Activated CD8-positive, alpha-beta memory T cell treated with anti-CD3 and anti-CD28 coated beads, Interleukin-2, amount 10 ng/mL, durations not matched to agents 7 days and 5 days (primary cell): ENCODE measurements at regions of chr6 and their contacts with region 1.

Region 1: GRCh38 chr6:30489081-30490025 is at the start of gene HLA-E:
- DNase-seq: peak; percentile 96
- ATAC-seq: peak; percentile 83
- H3K4me3 Mint-ChIP-seq: peak within 1 kb of the TSS; percentile 99
- H3K27ac Mint-ChIP-seq: peak within 1 kb of the TSS; percentile 98
- H3K4me1 Mint-ChIP-seq: peaks cover 50% of the 10 kb centered on the region
- H3K27me3 Mint-ChIP-seq: peaks cover 2% of the 10 kb centered on the region
- total RNA-seq, gene HLA-E: 395 to 602 TPM

Region 2: DNA sequence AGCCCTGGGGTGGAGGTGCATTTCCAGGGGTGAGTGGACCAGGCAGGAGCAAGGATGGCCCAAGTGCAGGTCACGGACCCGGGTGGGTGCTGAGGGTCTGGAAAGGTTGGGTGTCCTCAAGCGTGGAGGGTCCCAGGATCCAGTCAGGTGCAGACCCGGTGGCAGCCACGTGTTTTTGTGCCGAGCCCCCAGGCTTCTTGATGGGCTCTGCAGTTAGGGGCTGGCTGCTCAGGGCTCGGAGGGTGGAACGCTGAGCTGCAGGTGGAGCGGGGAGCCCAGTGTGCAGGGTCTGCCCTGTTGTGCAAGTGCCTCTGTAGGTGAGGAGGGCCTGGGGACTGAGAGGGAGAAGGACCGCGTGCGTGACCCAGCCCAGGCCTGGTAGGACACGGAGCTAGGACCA is 70.9 kb before region 1 on chr6:
- CTCF ChIA-PET with region 1: no interaction called
- DNase-seq: no peak
- ATAC-seq: no peak
- H3K4me3 Mint-ChIP-seq: no peak overlapping the region
- H3K27ac Mint-ChIP-seq: no peak overlapping the region
- H3K4me1 Mint-ChIP-seq: no peaks in the 10 kb centered on the region
- H3K27me3 Mint-ChIP-seq: peaks cover 62% of the 10 kb centered on the region

Region 3: DNA sequence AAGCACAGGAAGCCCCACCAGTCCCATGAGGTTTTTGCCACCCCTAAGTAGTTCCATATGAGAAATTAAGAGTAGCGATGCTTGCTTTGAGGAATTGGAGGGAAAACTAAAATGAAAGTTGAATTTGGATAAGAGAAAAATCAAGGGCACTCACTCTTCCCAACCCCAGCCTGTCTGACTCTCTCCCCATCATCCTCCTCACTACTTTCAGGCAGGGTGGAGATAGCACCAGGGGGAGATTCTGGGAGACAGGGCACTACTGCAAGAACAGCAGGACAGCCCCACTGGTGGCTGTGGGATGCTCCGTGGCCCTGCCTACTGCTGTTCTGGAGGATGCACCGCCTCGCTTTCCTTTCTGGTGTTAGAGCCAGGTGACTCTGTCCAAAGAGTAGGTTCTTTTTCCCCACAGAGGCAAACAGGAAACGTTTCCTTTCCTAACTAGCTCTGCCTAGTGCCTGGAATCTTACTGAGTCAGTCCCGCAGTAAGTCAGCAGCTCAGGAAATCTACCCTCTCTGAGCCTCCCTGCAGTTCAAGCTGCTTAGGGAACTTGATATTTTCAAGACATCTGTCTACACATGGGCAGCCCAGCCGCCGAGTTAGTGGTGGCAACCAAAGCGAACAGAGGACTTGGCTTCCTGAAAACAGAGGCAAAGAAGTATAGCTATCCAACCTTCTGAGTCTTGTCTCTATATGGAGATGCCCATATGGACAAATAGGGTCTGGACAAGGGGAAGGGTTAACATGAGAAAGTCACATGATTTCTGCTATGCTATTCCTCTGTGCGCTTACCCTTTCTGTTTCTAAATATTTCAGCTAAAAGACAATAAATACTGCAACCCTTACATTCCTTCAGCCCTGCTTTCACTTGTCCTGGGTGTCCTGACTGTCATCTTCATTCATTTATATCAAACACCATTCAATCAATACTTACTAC is 11.3 kb after region 1 on chr6:
- CTCF ChIA-PET with region 1: interaction called, 37 read pairs
- DNase-seq: no peak
- ATAC-seq: peak; percentile 14
- H3K4me3 Mint-ChIP-seq: peak overlapping the region; percentile 30
- H3K27ac Mint-ChIP-seq: no peak overlapping the region
- H3K4me1 Mint-ChIP-seq: peaks cover 25% of the 10 kb centered on the region
- H3K27me3 Mint-ChIP-seq: no peaks in the 10 kb centered on the region

Region 4: GRCh38 chr6:30508890-30509736 is 19.8 kb after region 1 on chr6:
- CTCF ChIA-PET with region 1: interaction called, 39 read pairs
- DNase-seq: no peak
- ATAC-seq: peak; percentile 76
- H3K4me3 Mint-ChIP-seq: peak overlapping the region; percentile 48
- H3K27ac Mint-ChIP-seq: peak overlapping the region; percentile 90
- H3K4me1 Mint-ChIP-seq: peaks cover 46% of the 10 kb centered on the region
- H3K27me3 Mint-ChIP-seq: no peaks in the 10 kb centered on the region

Region 5: DNA sequence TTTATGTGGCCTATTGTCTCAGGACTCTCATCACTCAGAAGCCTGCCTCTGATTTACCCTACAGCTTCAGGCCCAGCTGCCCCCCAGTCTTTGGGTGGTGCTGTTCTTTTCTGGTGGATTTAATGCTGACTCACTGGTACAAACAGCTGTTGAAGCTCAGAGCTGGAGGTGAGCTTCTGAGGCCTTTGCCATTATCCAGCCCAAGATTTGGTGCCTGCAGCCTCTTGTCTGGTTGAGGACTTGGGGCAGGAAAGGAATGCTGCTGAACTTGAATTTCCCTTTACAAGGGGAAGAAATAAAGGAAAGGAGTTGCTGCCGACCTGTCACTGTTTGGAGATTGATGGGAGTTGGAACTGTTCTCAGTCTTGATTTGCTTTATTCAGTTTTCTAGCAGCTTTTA is 101.6 kb after region 1 on chr6:
- CTCF ChIA-PET with region 1: interaction called, 31 read pairs
- DNase-seq: no peak
- ATAC-seq: no peak
- H3K4me3 Mint-ChIP-seq: no peak overlapping the region
- H3K27ac Mint-ChIP-seq: peak overlapping the region; percentile 52
- H3K4me1 Mint-ChIP-seq: no peaks in the 10 kb centered on the region
- H3K27me3 Mint-ChIP-seq: no peaks in the 10 kb centered on the region